ENCODE measurements at regions of chr1 and their contacts with region 1.

Region 1: DNA sequence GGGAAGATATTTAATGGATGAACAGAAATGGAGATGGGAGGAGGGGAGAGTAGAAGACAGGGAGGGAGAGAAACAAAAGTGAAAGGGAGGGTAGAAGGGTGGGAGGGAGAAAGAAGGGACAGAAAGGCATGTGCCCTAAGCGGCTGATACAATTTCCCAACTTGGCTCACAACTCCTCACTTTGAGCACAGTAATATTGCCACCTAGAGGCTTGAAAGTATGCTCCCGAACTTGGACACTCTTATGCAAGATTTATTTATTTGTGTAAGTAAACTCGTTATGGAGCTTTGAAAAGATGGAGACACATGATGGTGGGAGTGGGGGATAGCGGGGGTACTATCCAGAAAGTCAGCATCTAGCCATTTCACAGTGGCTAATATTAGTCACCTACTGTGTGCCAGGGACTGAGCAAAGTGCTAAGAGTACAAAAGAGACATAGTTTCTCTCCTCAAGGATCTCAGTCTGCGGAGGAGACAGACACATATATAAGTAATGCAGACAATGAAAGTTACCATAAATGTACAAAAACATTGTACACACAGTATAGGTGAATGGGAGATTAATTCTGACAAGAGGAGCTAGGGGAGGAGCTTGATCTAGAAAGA is 189.7 kb downstream of the SEC16B start:
- DNase-seq: peak in 1 of 2 donors; percentile 16
- ATAC-seq: peak; percentile 98 to 99
- H3K4me3 ChIP-seq: no peak overlapping the region
- H3K27ac ChIP-seq: no peak overlapping the region
- H3K4me1 ChIP-seq: peaks cover 0 to 9% of the 10 kb centered on the region in 2 donors
- H3K27me3 ChIP-seq: no peaks in the 10 kb centered on the region
- CTCF ChIP-seq: peak; percentile 44 to 67 (median 64)
- POLR2A ChIP-seq: no peak

Region 2: GRCh38 chr1:177256153-177257075 is 523.8 kb before region 1 on chr1:
- in situ Hi-C with region 1: loop called (anchors 10 to 25 kb)
- intact Hi-C with region 1: loop called (anchors 1 kb)
- DNase-seq: peak; percentile 20 to 58
- ATAC-seq: peak; percentile 82 to 92
- H3K4me3 ChIP-seq: no peak overlapping the region
- H3K27ac ChIP-seq: peak overlapping the region in 1 of 4 donors; percentile 35
- H3K4me1 ChIP-seq: peaks cover 5 to 7% of the 10 kb centered on the region in 2 donors
- H3K27me3 ChIP-seq: no peaks in the 10 kb centered on the region
- CTCF ChIP-seq: peak; percentile 64 to 78 (median 77)
- POLR2A ChIP-seq: no peak

Region 3: GRCh38 chr1:177423090-177423489 is 357.1 kb before region 1 on chr1:
- in situ Hi-C with region 1: loop called in 2 of 4 experiments (anchors 25 kb)
- intact Hi-C with region 1: loop called (anchors 1 kb)
- DNase-seq: no peak
- ATAC-seq: no peak
- H3K4me3 ChIP-seq: no peak overlapping the region
- H3K27ac ChIP-seq: no peak overlapping the region
- H3K4me1 ChIP-seq: no peaks in the 10 kb centered on the region
- H3K27me3 ChIP-seq: no peaks in the 10 kb centered on the region
- CTCF ChIP-seq: no peak
- POLR2A ChIP-seq: no peak

Region 4: GRCh38 chr1:177568622-177569021 is 211.6 kb before region 1 on chr1:
- in situ Hi-C with region 1: no loop called
- intact Hi-C with region 1: loop called (anchors 2 kb)
- DNase-seq: no peak
- ATAC-seq: no peak
- H3K4me3 ChIP-seq: no peak overlapping the region
- H3K27ac ChIP-seq: no peak overlapping the region
- H3K4me1 ChIP-seq: no peaks in the 10 kb centered on the region
- H3K27me3 ChIP-seq: no peaks in the 10 kb centered on the region
- CTCF ChIP-seq: peak in 2 of 5 experiments; percentile 29 to 35
- POLR2A ChIP-seq: no peak

Region 5: GRCh38 chr1:178224358-178224757 is 444.2 kb after region 1 on chr1:
- in situ Hi-C with region 1: no loop called
- intact Hi-C with region 1: no loop called
- DNase-seq: no peak
- ATAC-seq: no peak
- H3K4me3 ChIP-seq: no peak overlapping the region
- H3K27ac ChIP-seq: no peak overlapping the region
- H3K4me1 ChIP-seq: no peaks in the 10 kb centered on the region
- H3K27me3 ChIP-seq: no peaks in the 10 kb centered on the region
- CTCF ChIP-seq: no peak
- POLR2A ChIP-seq: no peak

Measured in gastrocnemius medialis (tissue), 4 donors.